ENCODE measurements at regions of chr10 and their contacts with region 1.

Region 1: GRCh38 chr10:81978238-81978637 is 103.2 kb downstream of the NRG3 start:
- DNase-seq: peak; percentile 42
- H3K4me3 ChIP-seq: no peak overlapping the region
- H3K27ac ChIP-seq: no peak overlapping the region
- H3K4me1 ChIP-seq: peaks cover 8% of the 10 kb centered on the region
- H3K27me3 ChIP-seq: no peaks in the 10 kb centered on the region
- CTCF ChIP-seq: no peak
- POLR2A ChIP-seq: no peak

Region 2: DNA sequence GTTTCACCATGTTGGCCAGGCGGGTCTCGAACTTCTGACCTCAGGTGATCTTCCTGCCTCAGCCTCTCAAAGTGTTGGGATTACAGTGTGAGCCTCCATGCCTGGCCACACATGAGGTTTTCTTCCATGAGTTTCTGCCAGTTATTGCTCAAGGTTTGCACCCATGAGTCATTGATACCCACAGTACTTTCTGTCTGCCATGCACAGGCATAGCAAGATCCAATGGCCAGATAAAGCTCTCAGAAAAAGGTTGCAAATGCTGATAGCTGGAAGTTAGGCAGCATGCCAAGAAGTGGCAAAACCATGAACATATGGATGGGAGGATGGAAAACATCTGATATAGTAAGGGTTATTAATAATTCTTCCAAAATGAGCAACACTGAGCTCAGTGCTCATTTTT is 401.9 kb before region 1 on chr10:
- CTCF ChIA-PET with region 1: no interaction called
- POLR2A ChIA-PET with region 1: no interaction called
- dilution Hi-C with region 1: no loop called
- intact Hi-C with region 1: loop called (anchors 5 kb)
- DNase-seq: no peak
- H3K4me3 ChIP-seq: no peak overlapping the region
- H3K27ac ChIP-seq: no peak overlapping the region
- H3K4me1 ChIP-seq: no peaks in the 10 kb centered on the region
- H3K27me3 ChIP-seq: no peaks in the 10 kb centered on the region
- CTCF ChIP-seq: no peak
- POLR2A ChIP-seq: no peak

Region 3: GRCh38 chr10:82041018-82041417 is 62.8 kb after region 1 on chr10:
- CTCF ChIA-PET with region 1: no interaction called
- POLR2A ChIA-PET with region 1: no interaction called
- dilution Hi-C with region 1: no loop called
- intact Hi-C with region 1: loop called (anchors 5 kb)
- DNase-seq: no peak
- H3K4me3 ChIP-seq: no peak overlapping the region
- H3K27ac ChIP-seq: no peak overlapping the region
- H3K4me1 ChIP-seq: no peaks in the 10 kb centered on the region
- H3K27me3 ChIP-seq: no peaks in the 10 kb centered on the region
- CTCF ChIP-seq: no peak
- POLR2A ChIP-seq: no peak